ENCODE measurements at regions of chr2 and their contacts with region 1.

Region 1: DNA sequence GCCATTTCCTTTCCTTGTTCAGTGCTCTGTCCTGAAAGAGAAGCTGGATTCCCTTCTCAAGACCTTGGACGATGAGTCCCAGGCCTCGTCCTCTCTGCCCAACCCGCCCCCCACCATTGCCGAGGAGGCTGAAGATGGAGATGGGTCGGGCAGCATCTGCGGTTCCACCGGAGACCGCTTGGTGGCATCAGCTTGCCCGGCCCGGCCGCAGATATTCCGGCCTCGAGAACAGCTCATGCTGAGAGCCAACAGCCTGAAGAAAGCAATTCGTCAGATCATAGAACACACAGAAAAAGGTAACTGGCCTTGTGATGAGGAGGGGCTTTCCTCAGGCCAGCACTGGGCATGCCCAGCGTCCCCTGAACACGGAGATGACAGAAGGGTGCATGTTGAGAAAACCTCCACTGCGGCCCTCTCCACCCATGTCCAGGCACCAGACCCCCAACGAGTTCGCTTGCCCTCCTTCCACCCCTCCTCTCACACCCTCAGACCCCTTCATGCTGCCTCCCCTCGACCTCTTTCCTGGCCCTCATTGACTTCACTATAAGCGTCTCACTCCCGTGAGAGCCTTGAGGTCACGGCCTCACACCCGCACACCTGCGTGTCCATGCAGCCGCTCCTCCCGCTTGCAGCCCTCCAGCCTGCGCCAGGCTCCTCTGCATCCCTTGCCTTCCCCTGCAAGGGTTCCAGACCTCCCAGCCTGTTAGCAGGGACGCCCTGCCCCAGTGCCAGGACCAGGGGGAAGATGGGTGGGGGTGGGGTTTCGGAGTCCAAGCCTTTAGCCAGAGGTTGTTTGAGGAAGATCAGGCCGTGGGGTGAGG is 95.0 kb downstream of the DGKD start:
- DNase-seq: no peak
- ATAC-seq: no peak
- H3K4me3 ChIP-seq: no peak overlapping the region
- H3K27ac ChIP-seq: no peak overlapping the region
- H3K4me1 ChIP-seq: no peaks in the 10 kb centered on the region
- H3K27me3 ChIP-seq: no peaks in the 10 kb centered on the region
- CTCF ChIP-seq: no peak
- EP300 ChIP-seq: no peak
- POLR2A ChIP-seq: 0 out of 2 replicates have a peak, but pooled peaks have one; percentile 20
- RAD21 ChIP-seq: no peak

Region 2: GRCh38 chr2:233280114-233280693 is 169.1 kb before region 1 on chr2:
- CTCF ChIA-PET with region 1: no interaction called
- POLR2A ChIA-PET with region 1: no interaction called
- RAD21 ChIA-PET with region 1: no interaction called
- SMC1A ChIA-PET with region 1: no interaction called
- in situ Hi-C with region 1: no loop called
- intact Hi-C with region 1: no loop called
- DNase-seq: no peak
- ATAC-seq: no peak
- H3K4me3 ChIP-seq: no peak overlapping the region
- H3K27ac ChIP-seq: no peak overlapping the region
- H3K4me1 ChIP-seq: no peaks in the 10 kb centered on the region
- H3K27me3 ChIP-seq: no peaks in the 10 kb centered on the region
- CTCF ChIP-seq: no peak
- EP300 ChIP-seq: no peak
- POLR2A ChIP-seq: no peak
- RAD21 ChIP-seq: no peak

Region 3: DNA sequence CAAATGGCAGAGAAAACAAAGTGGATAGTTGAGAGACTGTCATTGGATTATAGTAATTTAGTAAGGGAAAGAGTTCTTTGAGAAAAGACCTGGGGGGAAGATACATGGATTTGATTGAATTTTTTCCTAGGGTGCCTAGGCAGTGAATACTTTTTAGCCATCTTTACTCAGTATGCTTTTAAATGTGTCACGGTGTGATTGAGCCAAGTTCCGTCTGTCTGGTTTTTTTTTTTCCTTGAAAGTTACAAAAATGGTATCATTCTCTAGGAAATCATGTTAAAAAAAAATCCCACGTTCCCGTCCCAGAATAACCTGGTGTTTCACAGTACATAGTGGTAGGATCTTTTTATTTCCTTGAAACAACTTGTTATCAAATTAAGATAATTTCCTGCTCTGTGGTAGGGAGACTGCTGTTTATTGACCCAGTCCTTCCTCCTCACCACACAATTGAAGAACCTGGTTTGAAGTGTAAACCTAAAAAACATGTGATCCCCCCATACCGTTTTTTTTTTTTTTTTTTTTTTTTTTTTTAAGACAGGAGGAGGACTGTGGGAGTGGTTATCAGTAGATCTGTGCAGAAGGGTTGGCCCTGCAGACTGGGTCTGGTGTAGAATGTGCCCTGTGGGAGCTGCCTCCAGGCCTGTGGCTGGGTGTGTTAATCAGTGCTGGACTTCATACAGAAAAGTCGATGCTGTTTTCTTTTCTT is 39.9 kb before region 1 on chr2:
- CTCF ChIA-PET with region 1: interaction called, 215 read pairs
- POLR2A ChIA-PET with region 1: no interaction called
- RAD21 ChIA-PET with region 1: interaction called, 73 read pairs
- SMC1A ChIA-PET with region 1: interaction called, 80 read pairs
- in situ Hi-C with region 1: loop called (anchors 5 kb)
- intact Hi-C with region 1: no loop called
- DNase-seq: no peak
- ATAC-seq: no peak
- H3K4me3 ChIP-seq: no peak overlapping the region
- H3K27ac ChIP-seq: no peak overlapping the region
- H3K4me1 ChIP-seq: peaks cover 5% of the 10 kb centered on the region
- H3K27me3 ChIP-seq: no peaks in the 10 kb centered on the region
- CTCF ChIP-seq: no peak
- EP300 ChIP-seq: no peak
- POLR2A ChIP-seq: no peak
- RAD21 ChIP-seq: no peak

Region 4: GRCh38 chr2:233700028-233700635 is 250.8 kb after region 1 on chr2:
- CTCF ChIA-PET with region 1: no interaction called
- POLR2A ChIA-PET with region 1: no interaction called
- RAD21 ChIA-PET with region 1: no interaction called
- SMC1A ChIA-PET with region 1: no interaction called
- in situ Hi-C with region 1: no loop called
- intact Hi-C with region 1: no loop called
- DNase-seq: no peak
- ATAC-seq: no peak
- H3K4me3 ChIP-seq: no peak overlapping the region
- H3K27ac ChIP-seq: no peak overlapping the region
- H3K4me1 ChIP-seq: no peaks in the 10 kb centered on the region
- H3K27me3 ChIP-seq: no peaks in the 10 kb centered on the region
- CTCF ChIP-seq: no peak
- EP300 ChIP-seq: no peak
- POLR2A ChIP-seq: no peak
- RAD21 ChIP-seq: no peak

Measured in GM12878 (cell line).